Endothelial cell of umbilical vein (primary cell): ENCODE measurements at regions of chr14 and their contacts with region 1.

Region 1: GRCh38 chr14:34300882-34301734 is 160.9 kb downstream of the SPTSSA start:
- DNase-seq: peak; percentile 49
- H3K4me3 ChIP-seq: no peak overlapping the region
- H3K27ac ChIP-seq: no peak overlapping the region
- H3K4me1 ChIP-seq: no peaks in the 10 kb centered on the region
- H3K27me3 ChIP-seq: peaks cover 0 to 2% of the 10 kb centered on the region in 2 experiments
- CTCF ChIP-seq: peak; percentile 43 to 45
- POLR2A ChIP-seq: no peak

Region 2: DNA sequence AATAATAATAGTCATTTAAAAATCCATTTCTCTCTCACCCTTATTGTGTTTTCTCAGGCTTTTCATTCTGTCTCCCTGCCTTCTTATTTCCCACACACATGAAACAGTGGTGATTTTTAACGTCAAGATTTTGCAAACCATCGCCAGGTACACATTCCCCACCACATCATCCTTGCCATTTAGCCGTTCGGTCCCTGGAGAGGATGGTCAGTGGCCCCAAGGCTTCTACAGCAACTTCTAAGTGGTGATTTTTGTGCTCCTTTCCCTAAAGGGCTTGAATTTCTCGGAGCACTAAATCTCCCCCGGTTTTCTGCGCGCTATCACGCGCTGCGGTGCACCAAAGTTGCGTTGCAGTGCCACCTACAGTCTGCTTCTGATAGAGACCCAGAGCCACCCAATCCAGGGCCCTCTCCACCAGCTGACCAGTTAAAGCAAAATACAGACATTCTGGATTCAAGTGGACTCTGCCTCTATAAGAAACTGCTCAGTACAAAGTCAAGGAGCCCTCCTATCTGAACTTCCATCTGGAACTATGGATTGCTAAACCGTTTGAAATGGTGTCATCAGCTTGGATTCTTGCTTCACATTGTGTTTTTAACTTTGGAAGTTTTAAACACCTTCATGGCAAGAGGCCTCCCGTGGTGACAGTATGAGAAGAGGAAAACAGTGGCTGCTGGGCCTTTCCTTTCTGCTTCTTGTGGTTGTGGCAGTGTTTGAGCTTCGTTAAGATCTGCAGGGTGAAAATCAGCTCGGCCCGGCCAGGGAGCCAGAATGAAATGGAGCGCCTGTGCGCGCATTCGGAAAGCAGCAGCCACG is 73.1 kb before region 1 on chr14:
- CTCF ChIA-PET with region 1: interaction called, 3 read pairs
- POLR2A ChIA-PET with region 1: no interaction called
- dilution Hi-C with region 1: no loop called
- intact Hi-C with region 1: loop called (anchors 5 kb)
- DNase-seq: peak; percentile 50
- H3K4me3 ChIP-seq: no peak overlapping the region
- H3K27ac ChIP-seq: no peak overlapping the region
- H3K4me1 ChIP-seq: no peaks in the 10 kb centered on the region
- H3K27me3 ChIP-seq: peaks cover 3 to 4% of the 10 kb centered on the region in 2 experiments
- CTCF ChIP-seq: peak; percentile 74 to 83
- POLR2A ChIP-seq: no peak

Region 3: DNA sequence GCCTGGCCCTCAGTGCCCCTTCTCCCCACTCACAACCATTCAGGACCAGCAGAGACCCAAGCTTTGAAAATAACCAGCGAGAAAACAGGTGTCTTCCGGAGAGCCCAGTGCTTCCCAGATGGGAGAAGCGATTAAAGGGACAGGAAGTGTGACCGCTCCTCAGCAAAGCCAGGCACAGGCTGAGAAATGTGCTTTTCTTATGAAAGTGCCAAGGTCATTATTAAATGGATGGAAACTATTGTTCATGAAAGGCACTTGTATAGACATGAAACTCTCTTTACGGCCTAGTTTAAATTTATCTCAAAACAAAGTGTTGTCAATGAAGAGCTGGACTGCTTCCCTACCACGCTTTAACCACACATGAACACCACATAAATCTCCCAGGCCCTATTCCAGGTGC is 49.4 kb before region 1 on chr14:
- CTCF ChIA-PET with region 1: no interaction called
- POLR2A ChIA-PET with region 1: no interaction called
- dilution Hi-C with region 1: no loop called
- intact Hi-C with region 1: loop called (anchors 2 kb)
- DNase-seq: peak; percentile 42
- H3K4me3 ChIP-seq: no peak overlapping the region
- H3K27ac ChIP-seq: peak overlapping the region; percentile 74
- H3K4me1 ChIP-seq: peaks cover 2% of the 10 kb centered on the region
- H3K27me3 ChIP-seq: no peaks in the 10 kb centered on the region
- CTCF ChIP-seq: no peak
- POLR2A ChIP-seq: no peak